Right cardiac atrium (tissue), 5 donors: ENCODE measurements at regions of chr17 and their contacts with region 1.

Region 1: DNA sequence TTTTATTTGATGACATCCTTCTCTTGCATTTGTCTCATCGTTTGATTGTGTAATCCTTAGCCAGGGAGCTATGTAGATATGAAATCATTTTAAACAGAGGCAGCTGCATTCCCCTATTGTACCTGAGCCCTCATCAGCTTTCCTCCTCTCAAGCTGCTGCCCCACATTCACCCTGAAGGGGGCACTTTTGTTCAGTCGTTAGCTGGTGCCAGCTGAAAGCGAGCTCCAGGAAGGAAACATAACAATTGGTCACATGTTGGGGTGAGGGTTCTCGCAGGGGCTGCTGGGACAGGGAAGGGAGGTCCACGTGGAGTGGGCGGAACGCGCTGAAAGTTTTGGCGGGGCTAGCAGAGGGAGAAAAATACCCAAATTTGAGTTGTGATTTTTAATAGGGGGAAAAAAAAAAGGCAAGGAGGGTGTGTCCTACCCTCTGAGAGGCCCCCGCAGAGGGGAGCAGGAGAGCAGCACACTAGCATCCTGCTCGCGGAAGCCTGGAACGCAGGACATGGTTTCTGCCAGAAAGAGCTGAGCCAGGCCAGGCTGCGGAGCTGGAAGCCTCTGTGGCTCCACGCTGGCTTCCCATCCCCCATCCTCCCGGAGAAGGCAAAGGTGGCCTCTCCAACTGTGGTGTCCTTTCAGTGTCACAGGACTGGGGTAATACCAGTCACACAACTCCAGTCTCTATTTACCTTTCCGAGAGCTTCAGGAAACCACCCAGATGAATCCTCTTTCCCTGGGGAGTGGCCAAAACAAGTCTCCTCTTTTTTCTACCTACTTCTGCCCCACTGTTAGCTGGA is 8.5 kb upstream of the MSL1 start:
- DNase-seq: peak; percentile 91 to 96 (median 95)
- ATAC-seq: peak; percentile 76 to 79
- H3K4me3 ChIP-seq: peak overlapping the region; percentile 67
- H3K27ac ChIP-seq: peak overlapping the region; percentile 95
- H3K4me1 ChIP-seq: peaks cover 11% of the 10 kb centered on the region
- H3K27me3 ChIP-seq: no peaks in the 10 kb centered on the region

Region 2: GRCh38 chr17:39351508-39351907 is 761.8 kb before region 1 on chr17:
- intact Hi-C with region 1: no loop called
- DNase-seq: no peak
- ATAC-seq: no peak
- H3K4me3 ChIP-seq: no peak overlapping the region
- H3K27ac ChIP-seq: no peak overlapping the region
- H3K4me1 ChIP-seq: no peaks in the 10 kb centered on the region
- H3K27me3 ChIP-seq: no peaks in the 10 kb centered on the region

Region 3: DNA sequence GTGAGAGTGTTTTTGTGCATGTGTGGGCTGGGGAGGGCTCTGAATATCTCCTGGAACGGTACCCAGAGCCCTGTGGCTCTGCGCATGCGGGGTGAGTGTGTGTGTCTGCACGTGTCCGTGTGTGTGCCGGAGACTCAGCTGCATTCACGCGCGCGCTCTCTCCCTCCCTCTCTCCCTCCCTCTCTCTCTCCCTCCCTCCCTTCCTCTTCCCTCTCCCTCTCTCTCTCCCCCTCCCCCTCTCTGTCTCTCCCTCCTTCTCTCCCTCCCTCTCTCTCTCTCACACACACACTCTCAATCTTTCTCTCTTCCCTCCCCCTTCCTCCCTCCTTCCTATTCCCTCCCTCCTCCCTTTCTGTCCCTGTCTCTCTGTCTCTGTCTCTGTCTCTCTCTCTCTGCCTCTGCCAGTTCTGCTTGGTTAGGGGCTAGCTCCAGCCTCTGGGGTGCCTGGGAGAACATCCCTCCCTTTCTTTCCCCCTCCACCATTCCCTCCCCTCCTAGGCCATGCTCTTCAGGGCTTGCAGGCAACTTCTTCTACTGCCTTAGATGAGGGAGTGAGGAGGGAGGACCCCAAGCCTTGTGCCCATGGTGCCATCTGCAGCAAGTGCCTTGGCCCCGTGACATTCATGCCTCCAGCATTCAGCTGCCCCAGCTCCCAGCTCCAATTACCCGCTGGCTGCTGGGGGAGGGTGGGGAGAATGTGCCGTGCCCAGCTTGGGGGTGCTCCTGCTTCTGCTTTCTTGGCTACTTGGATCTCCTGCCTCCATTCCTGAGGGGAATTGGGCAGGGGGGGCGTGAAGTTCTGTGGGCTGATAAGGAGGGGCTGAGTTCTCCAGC is 44.2 kb before region 1 on chr17:
- intact Hi-C with region 1: loop called in 2 of 4 experiments (anchors 5 kb)
- DNase-seq: peak; percentile 91 to 98 (median 97)
- ATAC-seq: peak; percentile 59 to 60
- H3K4me3 ChIP-seq: peak overlapping the region; percentile 13
- H3K27ac ChIP-seq: peak overlapping the region; percentile 95
- H3K4me1 ChIP-seq: peaks cover 55% of the 10 kb centered on the region
- H3K27me3 ChIP-seq: no peaks in the 10 kb centered on the region

Region 4: GRCh38 chr17:40098846-40099618 is 14.3 kb before region 1 on chr17:
- intact Hi-C with region 1: loop called in 1 of 4 experiments (anchors 1 kb)
- DNase-seq: peak; percentile 100
- ATAC-seq: peak; percentile 87 to 89
- H3K4me3 ChIP-seq: peak overlapping the region; percentile 81
- H3K27ac ChIP-seq: peak overlapping the region; percentile 100
- H3K4me1 ChIP-seq: peaks cover 44% of the 10 kb centered on the region
- H3K27me3 ChIP-seq: no peaks in the 10 kb centered on the region

Region 5: GRCh38 chr17:40168262-40168832 is 55.0 kb after region 1 on chr17:
- intact Hi-C with region 1: loop called in 2 of 4 experiments (anchors 5 kb)
- DNase-seq: no peak
- ATAC-seq: peak; percentile 54 to 64
- H3K4me3 ChIP-seq: no peak overlapping the region
- H3K27ac ChIP-seq: peak overlapping the region; percentile 64
- H3K4me1 ChIP-seq: no peaks in the 10 kb centered on the region
- H3K27me3 ChIP-seq: no peaks in the 10 kb centered on the region